Posterior vena cava (tissue), 2 donors: ENCODE measurements at regions of chr7 and their contacts with region 1.

Region 1: DNA sequence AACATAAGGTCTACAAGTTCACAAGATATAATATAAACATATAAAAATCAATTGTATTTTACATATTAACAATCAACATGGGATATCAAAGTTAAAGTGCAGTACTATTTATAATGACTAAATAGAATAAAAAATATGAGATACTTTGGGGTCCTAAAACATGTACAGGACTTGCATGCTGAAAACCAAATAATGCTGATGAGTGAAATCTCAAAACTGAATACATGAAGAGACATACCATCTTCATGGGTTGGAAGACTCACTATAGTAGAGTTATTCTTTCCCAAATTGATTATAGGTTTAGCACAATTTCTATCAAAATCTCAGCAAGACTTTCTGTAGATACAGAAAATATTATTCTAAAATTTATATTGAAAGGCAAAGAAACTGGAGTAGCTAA is 181.5 kb downstream of the LHFPL3 start:
- DNase-seq: no peak

Region 2: DNA sequence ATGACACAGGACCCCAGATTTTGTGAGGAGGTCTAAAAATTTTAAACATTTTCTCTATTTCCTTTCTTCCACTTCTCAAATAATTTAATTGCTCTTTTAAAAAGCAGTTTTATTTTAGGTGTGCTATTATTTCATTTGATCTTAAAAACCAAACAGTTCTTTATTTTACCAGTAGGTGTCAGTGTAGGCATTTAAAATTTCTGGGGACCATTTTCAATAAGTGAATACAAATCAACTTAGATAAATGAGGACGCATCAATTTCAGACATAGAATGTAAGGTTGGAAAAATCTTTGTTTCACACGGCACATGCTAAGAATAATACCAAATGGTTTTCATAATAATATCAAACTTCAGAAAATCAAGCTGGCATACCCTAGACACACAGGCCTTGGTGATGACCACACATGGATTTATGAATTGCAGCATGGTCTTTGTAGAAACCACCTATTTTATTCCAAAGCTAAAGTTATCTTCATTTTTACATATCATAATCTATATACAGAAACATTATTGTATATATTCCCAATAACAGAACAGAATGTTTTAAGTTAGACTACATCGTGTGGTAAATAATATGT is 936.3 kb before region 1 on chr7:
- intact Hi-C with region 1: loop called in 1 of 2 experiments (anchors 5 kb)
- DNase-seq: no peak